PC-3 (cell line): ENCODE measurements at regions of chr5 and their contacts with region 1.

Region 1: GRCh38 chr5:177454397-177455035 is 7.9 kb downstream of the PRR7 start:
- DNase-seq: peak; percentile 94
- ATAC-seq: peak; percentile 48
- H3K4me3 ChIP-seq: peak overlapping the region; percentile 88
- H3K27ac ChIP-seq: peak overlapping the region; percentile 60
- H3K4me1 ChIP-seq: peaks cover 16% of the 10 kb centered on the region; the same call in 1 of the 2 replicates
- H3K27me3 ChIP-seq: no peaks in the 10 kb centered on the region
- CTCF ChIP-seq: peak; percentile 83

Region 2: GRCh38 chr5:177071666-177072385 is 382.7 kb before region 1 on chr5:
- CTCF ChIA-PET with region 1: no interaction called
- POLR2A ChIA-PET with region 1: no interaction called
- intact Hi-C with region 1: no loop called
- DNase-seq: peak; percentile 96
- ATAC-seq: peak; percentile 97
- H3K4me3 ChIP-seq: no peak overlapping the region
- H3K27ac ChIP-seq: no peak overlapping the region
- H3K4me1 ChIP-seq: no peaks in the 10 kb centered on the region
- H3K27me3 ChIP-seq: no peaks in the 10 kb centered on the region
- CTCF ChIP-seq: peak; percentile 96

Region 3: GRCh38 chr5:177309351-177310191 is 144.9 kb before region 1 on chr5:
- CTCF ChIA-PET with region 1: interaction called, 3 read pairs
- POLR2A ChIA-PET with region 1: no interaction called
- intact Hi-C with region 1: loop called (anchors 2 kb)
- DNase-seq: peak; percentile 94
- ATAC-seq: peak; percentile 33
- H3K4me3 ChIP-seq: peak overlapping the region; percentile 76; the same call in 1 of the 2 replicates
- H3K27ac ChIP-seq: no peak overlapping the region
- H3K4me1 ChIP-seq: peaks cover 39% of the 10 kb centered on the region
- H3K27me3 ChIP-seq: no peaks in the 10 kb centered on the region
- CTCF ChIP-seq: peak; percentile 99

Region 4: GRCh38 chr5:177317959-177318377 is 136.5 kb before region 1 on chr5:
- CTCF ChIA-PET with region 1: interaction called, 4 read pairs
- POLR2A ChIA-PET with region 1: no interaction called
- intact Hi-C with region 1: loop called (anchors 2 kb)
- DNase-seq: peak; percentile 95
- ATAC-seq: peak; percentile 76
- H3K4me3 ChIP-seq: no peak overlapping the region
- H3K27ac ChIP-seq: no peak overlapping the region
- H3K4me1 ChIP-seq: peaks cover 3% of the 10 kb centered on the region
- H3K27me3 ChIP-seq: no peaks in the 10 kb centered on the region
- CTCF ChIP-seq: peak; percentile 99

Region 5: GRCh38 chr5:177390363-177391300 is 63.9 kb before region 1 on chr5:
- CTCF ChIA-PET with region 1: interaction called, 5 read pairs
- POLR2A ChIA-PET with region 1: no interaction called
- intact Hi-C with region 1: loop called (anchors 1 kb)
- DNase-seq: peak; percentile 95
- ATAC-seq: peak; percentile 73
- H3K4me3 ChIP-seq: peak overlapping the region; percentile 24; the same call in 1 of the 2 replicates
- H3K27ac ChIP-seq: peak overlapping the region; percentile 95
- H3K4me1 ChIP-seq: peaks cover 27% of the 10 kb centered on the region
- H3K27me3 ChIP-seq: no peaks in the 10 kb centered on the region
- CTCF ChIP-seq: peak; percentile 93

Region 6: DNA sequence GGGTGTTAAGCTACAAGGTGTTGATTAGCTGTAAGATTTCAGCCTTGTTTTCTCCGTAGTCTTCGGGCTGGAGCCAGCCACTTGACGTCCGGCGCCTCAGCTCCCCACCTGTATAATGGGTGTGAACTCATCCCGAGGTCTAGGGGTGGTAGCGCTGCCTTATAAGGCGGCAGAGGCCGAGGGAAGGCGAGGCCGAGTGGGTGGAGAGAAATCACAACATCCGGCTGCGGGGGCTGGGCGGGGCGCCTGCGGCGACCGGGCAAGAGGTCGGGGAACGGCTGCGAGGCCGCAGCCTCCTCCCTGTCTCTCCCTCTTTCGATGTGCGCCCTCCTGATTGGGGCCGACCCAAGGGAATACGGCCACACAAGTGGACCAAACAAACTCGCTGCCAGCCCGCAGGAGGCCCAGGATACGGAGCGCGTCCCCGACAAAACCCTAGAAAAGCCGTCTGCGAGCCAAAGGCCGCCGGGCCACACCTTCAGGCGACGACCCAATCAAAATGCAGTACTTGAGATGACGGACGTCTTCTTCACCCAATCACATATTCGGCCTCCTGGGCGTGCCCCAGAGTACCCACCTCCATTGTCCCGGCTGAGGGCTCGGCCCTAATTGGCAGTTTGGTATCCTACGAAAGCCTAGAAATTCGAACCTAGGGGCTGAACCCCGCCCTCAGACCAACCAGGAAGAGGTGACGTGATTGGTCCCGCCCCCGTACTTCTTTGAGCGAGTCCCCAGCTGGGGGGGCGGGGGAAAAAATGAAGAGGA is 28.5 kb before region 1 on chr5:
- CTCF ChIA-PET with region 1: interaction called, 14 read pairs
- POLR2A ChIA-PET with region 1: interaction called, 16 read pairs
- intact Hi-C with region 1: loop called (anchors 2 kb)
- DNase-seq: peak; percentile 100
- ATAC-seq: peak; percentile 91
- H3K4me3 ChIP-seq: peak overlapping the region; percentile 72
- H3K27ac ChIP-seq: peak overlapping the region; percentile 72
- H3K4me1 ChIP-seq: peaks cover 19% of the 10 kb centered on the region
- H3K27me3 ChIP-seq: no peaks in the 10 kb centered on the region
- CTCF ChIP-seq: no peak

Region 7: DNA sequence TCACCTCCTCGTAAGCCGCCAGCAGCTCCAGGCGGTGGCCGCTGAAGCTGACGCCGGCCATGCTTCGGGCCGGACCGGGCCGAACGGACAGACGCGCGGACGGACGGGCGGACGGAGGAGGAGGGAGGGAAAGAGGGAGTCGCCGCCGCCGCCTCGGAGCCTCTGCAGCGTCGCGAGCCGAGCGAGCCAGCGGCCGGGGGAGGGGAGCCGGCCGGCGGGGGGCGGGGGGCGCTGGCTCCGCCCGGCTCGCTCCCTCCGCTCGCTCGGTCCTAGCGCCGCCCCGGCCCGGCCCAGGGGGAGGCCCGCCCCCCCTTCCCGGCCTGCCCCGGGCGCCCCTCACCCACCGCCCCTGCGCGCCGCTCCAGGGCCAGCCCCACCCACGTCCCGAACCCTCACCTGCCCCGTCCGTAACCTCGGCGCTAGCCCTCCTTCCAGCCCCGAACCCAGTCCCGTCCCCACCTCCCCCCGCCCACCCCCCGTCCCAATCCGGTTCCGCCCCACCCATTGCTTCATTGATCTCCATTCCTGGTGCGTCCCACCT is 19.0 kb after region 1 on chr5 and contains the start of gene DBN1:
- CTCF ChIA-PET with region 1: interaction called, 6 read pairs
- POLR2A ChIA-PET with region 1: no interaction called
- intact Hi-C with region 1: loop called (anchors 2 kb)
- DNase-seq: peak; percentile 61
- ATAC-seq: peak; percentile 69
- H3K4me3 ChIP-seq: peak within 1 kb of the TSS; percentile 90
- H3K27ac ChIP-seq: no peak within 1 kb of the TSS
- H3K4me1 ChIP-seq: peaks cover 21% of the 10 kb centered on the region
- H3K27me3 ChIP-seq: no peaks in the 10 kb centered on the region
- CTCF ChIP-seq: no peak
- total RNA-seq, gene DBN1: 127 and 207 TPM in 2 replicates

Region 8: DNA sequence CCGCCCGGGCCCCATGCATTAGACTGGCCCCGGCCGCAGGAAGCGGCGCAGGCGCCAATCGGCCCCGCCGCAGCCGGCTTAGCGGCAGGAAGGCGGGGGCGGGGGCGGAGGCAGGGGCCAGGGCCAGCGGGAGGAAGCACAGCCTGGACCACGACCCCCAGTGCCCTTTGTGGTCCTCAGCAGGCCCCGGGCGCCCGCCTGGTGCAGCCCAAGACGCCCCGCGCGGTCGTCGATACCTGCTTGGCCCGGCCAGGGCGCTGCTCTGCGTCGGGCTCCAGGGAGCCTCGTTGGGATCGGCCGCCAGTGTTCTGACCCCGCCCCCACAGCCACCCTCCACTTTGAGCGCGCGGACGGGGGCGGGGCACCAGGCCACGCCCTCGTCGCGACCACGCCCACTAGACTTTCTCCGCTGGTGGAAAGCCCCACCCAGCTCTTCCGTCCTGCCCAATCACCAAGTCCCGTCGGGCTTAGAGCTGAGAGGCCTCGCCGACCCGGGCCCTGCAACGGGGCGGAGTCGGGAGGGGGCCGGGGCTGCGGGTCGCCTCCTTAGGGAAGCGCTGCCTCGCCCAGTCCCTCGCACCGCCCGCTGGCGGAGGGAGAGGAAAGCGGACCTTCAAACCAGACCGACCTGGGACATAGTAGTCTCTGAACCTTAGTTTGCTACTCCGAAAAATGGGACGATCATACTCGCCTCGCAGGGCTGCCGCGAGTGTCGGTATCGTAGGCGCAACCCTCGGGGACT is 42.9 kb after region 1 on chr5 and contains the start of gene PDLIM7:
- CTCF ChIA-PET with region 1: interaction called, 6 read pairs
- POLR2A ChIA-PET with region 1: interaction called, 4 read pairs
- intact Hi-C with region 1: loop called (anchors 1 kb)
- DNase-seq: peak; percentile 98
- ATAC-seq: peak; percentile 66
- H3K4me3 ChIP-seq: peak within 1 kb of the TSS; percentile 76
- H3K27ac ChIP-seq: peak within 1 kb of the TSS; percentile 93
- H3K4me1 ChIP-seq: peaks cover 41% of the 10 kb centered on the region
- H3K27me3 ChIP-seq: no peaks in the 10 kb centered on the region
- CTCF ChIP-seq: peak; percentile 24; the same call in 1 of the 2 replicates
- total RNA-seq, gene PDLIM7: 159 and 195 TPM in 2 replicates

Region 9: GRCh38 chr5:177509381-177509951 is 55.0 kb after region 1 on chr5 and contains the start of gene DOK3:
- CTCF ChIA-PET with region 1: no interaction called
- POLR2A ChIA-PET with region 1: no interaction called
- intact Hi-C with region 1: no loop called
- DNase-seq: no peak
- ATAC-seq: no peak
- H3K4me3 ChIP-seq: no peak within 1 kb of the TSS
- H3K27ac ChIP-seq: no peak within 1 kb of the TSS
- H3K4me1 ChIP-seq: no peaks in the 10 kb centered on the region
- H3K27me3 ChIP-seq: no peaks in the 10 kb centered on the region
- CTCF ChIP-seq: no peak
- total RNA-seq, gene DOK3: 6.2 and 11.7 TPM in 2 replicates